Heart right ventricle (tissue), 16 donors: ENCODE measurements at regions of chr9 and their contacts with region 1.

Region 1: DNA sequence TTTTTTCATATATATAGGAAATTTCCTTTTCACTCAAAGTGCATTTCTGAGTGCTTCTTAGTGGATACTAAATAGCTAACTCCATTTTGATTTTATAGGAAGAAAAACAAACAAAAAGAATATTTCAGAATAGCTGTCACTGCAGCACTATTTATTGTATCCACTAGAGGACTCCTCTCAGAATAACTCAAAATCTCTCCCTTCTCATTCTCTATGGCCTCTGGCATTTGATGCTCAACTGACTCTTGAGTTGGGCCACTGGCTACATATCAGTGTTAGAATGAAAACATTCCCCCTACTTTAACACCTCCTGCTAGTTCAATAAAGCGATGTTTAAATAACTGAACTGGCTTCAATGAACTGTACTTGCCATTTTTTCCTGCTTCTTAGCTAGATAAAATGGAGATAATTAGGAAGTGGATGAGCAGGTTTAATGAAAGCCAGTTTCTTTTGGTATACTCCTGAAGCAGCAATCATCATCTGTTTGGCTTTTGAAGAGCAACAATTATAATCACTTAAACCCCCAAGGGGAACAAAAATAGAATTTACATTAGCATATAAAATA is 16.6 kb upstream of the ELAVL2 start:
- DNase-seq: no peak
- ATAC-seq: no peak
- H3K4me3 ChIP-seq: no peak overlapping the region
- H3K27ac ChIP-seq: no peak overlapping the region
- H3K4me1 ChIP-seq: no peaks in the 10 kb centered on the region
- H3K27me3 ChIP-seq: peaks cover 0 to 58% (median 9%) of the 10 kb centered on the region in 7 donors
- CTCF ChIP-seq: no peak

Region 2: GRCh38 chr9:23754551-23754950 is 88.1 kb before region 1 on chr9:
- intact Hi-C with region 1: no loop called
- DNase-seq: no peak
- ATAC-seq: no peak
- H3K4me3 ChIP-seq: no peak overlapping the region
- H3K27ac ChIP-seq: no peak overlapping the region
- H3K4me1 ChIP-seq: no peaks in the 10 kb centered on the region
- H3K27me3 ChIP-seq: no peaks in the 10 kb centered on the region
- CTCF ChIP-seq: no peak

Region 3: GRCh38 chr9:23803216-23803615 is 39.4 kb before region 1 on chr9:
- intact Hi-C with region 1: no loop called
- DNase-seq: no peak
- ATAC-seq: no peak
- H3K4me3 ChIP-seq: no peak overlapping the region
- H3K27ac ChIP-seq: no peak overlapping the region
- H3K4me1 ChIP-seq: no peaks in the 10 kb centered on the region
- H3K27me3 ChIP-seq: no peaks in the 10 kb centered on the region
- CTCF ChIP-seq: no peak

Region 4: GRCh38 chr9:23907343-23907742 is 64.7 kb after region 1 on chr9:
- intact Hi-C with region 1: loop called in 1 of 10 experiments (anchors 10 kb)
- DNase-seq: no peak
- ATAC-seq: no peak
- H3K4me3 ChIP-seq: no peak overlapping the region
- H3K27ac ChIP-seq: no peak overlapping the region
- H3K4me1 ChIP-seq: no peaks in the 10 kb centered on the region
- H3K27me3 ChIP-seq: no peaks in the 10 kb centered on the region
- CTCF ChIP-seq: no peak